ENCODE measurements at regions of chr1 and their contacts with region 1.

Region 1: DNA sequence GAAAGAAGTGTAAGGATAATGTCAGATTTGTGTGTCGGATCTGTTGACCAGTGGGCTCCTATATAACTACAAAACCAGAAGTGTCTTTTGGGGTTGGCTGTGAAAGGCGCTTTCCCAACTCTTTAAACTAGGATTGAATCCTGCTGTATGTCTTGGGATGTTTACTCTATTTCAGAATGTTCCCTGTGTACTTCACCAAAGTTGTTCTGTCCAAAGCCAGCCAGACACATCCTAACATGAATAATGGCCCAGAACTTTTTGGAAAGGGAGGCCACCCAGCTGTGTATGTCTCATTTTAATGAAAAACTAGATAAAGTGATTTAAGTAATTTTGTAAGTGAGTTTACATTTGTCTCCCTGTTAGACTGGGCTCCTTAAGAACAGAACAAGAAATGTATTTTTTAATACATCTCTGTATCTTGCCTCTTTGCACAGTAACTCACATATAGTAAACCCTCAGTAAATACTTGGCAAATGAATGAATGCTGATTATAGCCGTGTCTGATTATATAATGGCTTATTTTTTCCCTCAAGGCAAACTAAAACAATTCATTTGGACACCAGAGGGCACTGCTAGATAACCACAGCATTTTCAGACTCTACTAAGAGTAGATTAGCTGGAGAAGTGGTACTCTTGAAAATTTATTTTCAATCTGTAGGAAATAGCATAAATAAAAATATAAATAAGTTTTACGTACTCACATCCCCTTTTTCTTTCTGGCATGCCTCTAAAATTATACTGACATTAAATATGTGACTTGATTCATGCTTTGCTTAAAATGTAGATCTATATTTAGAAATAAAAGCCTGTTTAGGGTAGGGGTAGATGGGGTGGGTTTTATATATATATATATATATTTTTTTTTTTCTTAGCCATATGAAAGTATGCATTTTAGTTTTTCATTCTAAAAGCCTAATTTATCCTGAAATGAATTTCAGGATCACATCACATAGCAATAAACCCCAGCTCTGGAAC is 23.8 kb downstream of the TSEN15 start:
- DNase-seq: peak in 1 of 2 donors; percentile 67
- ATAC-seq: peak; percentile 65 to 91 (median 84)
- H3K4me3 ChIP-seq: no peak overlapping the region
- H3K27ac ChIP-seq: peak overlapping the region in 7 of 10 donors; percentile 2 to 69 (median 46)
- H3K4me1 ChIP-seq: peaks cover 0 to 29% (median 9%) of the 10 kb centered on the region in 9 donors
- H3K27me3 ChIP-seq: no peaks in the 10 kb centered on the region
- CTCF ChIP-seq: peak; percentile 55 to 91 (median 79)

Region 2: GRCh38 chr1:184222652-184223052 is 147.3 kb after region 1 on chr1:
- intact Hi-C with region 1: loop called (anchors 1 to 5 kb)
- DNase-seq: peak; percentile 48 to 56
- ATAC-seq: peak; percentile 46 to 76 (median 65)
- H3K4me3 ChIP-seq: peak overlapping the region in 9 of 10 donors; percentile 12 to 49 (median 37)
- H3K27ac ChIP-seq: peak overlapping the region in 5 of 10 donors; percentile 4 to 37 (median 28)
- H3K4me1 ChIP-seq: peaks cover 0 to 8% (median 4%) of the 10 kb centered on the region in 9 donors
- H3K27me3 ChIP-seq: no peaks in the 10 kb centered on the region
- CTCF ChIP-seq: peak; percentile 92 to 99 (median 96)

Region 3: DNA sequence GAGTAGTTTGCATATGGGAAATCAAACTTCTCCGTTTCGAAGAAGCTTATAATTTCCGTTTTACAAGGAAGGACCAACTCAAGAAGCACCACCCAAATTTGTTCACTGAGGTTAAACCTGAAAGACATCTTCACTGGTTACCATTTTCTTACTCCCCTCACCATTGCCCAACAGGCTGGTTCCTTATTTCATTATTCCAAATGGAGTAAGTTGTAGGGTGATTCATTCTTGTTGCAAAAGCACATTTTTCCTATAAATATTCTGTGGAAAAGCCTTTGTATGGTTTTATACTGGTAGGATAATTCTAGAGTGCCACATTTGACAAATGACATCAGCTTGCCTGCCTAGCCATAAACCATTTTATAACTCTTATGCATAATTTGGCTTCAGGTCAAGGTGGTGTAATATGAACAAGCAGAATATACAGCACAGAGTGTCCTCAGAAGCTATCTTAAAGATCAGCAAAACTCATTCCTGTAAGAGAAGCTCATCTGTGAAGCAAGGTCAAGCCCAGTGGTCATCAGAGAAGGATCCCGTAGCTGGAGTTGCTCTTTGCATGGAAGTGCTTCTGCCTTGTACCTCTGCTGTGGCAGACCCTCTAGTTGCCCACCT is 287.4 kb after region 1 on chr1:
- intact Hi-C with region 1: loop called in 1 of 10 experiments (anchors 10 kb)
- DNase-seq: no peak
- ATAC-seq: peak in 1 of 8 donors; percentile 35
- H3K4me3 ChIP-seq: no peak overlapping the region
- H3K27ac ChIP-seq: no peak overlapping the region
- H3K4me1 ChIP-seq: peaks cover 0 to 8% (median 0%) of the 10 kb centered on the region in 9 donors
- H3K27me3 ChIP-seq: no peaks in the 10 kb centered on the region
- CTCF ChIP-seq: no peak

Region 4: DNA sequence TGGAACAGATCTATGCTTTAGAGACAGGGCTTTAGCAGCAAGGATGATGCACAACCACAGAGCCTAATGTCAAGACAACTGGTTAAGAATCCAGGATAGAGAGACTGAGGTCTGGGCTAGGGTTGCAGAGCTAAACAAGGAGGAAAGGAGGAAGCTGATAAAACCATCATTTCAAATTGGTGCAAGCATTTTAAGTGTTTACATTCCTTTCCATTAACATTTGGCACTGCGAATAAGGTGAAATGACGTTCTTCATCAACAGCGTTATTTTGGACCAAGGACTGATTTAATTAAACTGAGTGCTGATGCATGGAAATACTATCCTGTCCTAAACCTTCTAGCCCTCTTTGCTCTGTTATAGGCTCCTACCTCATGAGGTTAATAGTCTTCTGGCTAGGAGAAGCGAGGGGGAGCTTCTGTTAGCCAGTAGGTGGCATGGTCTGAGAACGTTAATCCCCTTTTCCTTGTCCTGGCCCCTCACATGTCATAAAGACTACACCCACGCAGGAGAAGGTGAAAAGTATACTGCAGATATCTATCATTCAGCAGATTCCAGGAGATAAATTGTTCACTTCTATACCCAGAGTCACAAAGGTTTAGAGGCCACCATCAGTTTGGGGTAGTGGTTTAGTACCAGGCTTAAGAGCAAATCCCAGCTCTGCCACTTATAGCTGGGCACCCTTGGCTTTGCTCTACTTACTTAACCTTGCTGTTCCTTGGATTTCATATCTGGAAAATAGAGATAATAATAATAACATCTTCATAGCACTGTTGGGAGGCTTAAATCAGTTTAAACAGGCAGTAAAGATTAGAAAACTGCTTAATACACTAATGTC is 304.0 kb after region 1 on chr1:
- intact Hi-C with region 1: loop called in 3 of 10 experiments (anchors 5 to 10 kb)
- DNase-seq: no peak
- ATAC-seq: peak in 5 of 8 donors; percentile 60 to 67 (median 65)
- H3K4me3 ChIP-seq: no peak overlapping the region
- H3K27ac ChIP-seq: no peak overlapping the region
- H3K4me1 ChIP-seq: peaks cover 0 to 8% (median 0%) of the 10 kb centered on the region in 9 donors
- H3K27me3 ChIP-seq: no peaks in the 10 kb centered on the region
- CTCF ChIP-seq: peak in 7 of 9 donors; percentile 7 to 50 (median 42)

Region 5: DNA sequence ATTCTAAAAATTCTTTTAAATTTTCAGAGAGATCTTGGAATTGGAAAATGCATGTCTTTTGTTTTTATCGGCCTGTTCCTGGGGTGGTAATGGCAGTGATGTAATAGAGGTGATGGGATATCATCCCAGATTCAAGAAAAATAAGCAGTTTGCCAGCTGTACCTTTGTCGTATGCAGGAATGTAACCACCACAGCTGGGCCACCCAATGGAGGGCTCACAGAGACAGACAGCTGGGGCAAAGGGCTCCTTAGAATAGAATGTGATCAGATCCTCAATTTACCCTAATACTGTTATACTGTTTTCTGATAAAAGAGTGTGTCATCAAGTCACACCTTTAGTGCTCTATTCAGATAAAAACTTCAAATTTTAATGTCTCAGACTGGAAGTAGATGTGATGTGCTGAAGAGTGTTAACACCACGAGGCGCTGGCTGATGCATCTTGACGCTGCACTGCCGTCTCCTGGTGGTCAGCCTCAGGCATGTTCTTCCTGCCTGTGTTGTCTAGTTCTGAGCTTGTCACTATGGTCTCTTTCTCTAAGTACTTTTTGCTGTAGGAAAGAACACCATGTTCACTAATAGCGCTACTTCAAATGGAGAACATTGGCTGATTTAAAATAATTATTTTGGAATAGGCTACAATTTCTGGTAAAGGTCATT is 390.3 kb after region 1 on chr1:
- intact Hi-C with region 1: loop called in 1 of 10 experiments (anchors 10 kb)
- DNase-seq: peak in 1 of 2 donors; percentile 39
- ATAC-seq: peak in 7 of 8 donors; percentile 48 to 84 (median 66)
- H3K4me3 ChIP-seq: no peak overlapping the region
- H3K27ac ChIP-seq: peak overlapping the region in 4 of 10 donors; percentile 10 to 24 (median 18)
- H3K4me1 ChIP-seq: peaks cover 7 to 84% (median 36%) of the 10 kb centered on the region in 9 donors
- H3K27me3 ChIP-seq: no peaks in the 10 kb centered on the region
- CTCF ChIP-seq: peak in 8 of 9 donors; percentile 16 to 64 (median 40)

Region 6: DNA sequence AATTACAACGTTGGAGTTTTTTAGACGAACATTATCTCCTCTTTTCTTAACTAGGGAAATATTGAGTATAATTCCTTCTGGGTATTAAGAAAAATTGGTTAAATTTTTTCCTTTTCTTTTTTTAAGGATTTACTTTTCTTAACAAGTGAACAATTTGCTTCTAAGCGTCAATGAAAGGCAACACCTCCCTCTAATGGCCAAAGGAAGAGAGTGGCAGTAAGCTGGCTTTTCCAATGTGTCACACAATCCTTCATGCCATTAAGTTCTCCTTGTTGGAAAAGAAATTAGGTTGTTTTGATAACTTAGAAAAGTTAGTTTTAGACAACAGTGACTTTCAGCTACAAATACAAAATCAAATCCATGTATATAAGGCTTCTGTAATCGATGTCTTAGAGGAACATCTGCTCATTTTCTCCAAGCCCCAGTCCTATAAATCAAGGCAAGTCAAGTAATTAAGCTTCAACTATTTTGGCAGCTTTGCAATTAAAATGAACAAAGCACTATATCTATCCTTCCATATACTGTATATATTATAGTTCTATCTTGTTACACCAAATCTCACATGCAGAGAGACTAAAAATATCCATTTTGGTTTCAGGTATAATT is 616.5 kb after region 1 on chr1:
- intact Hi-C with region 1: loop called in 5 of 10 experiments (anchors 2 to 10 kb)
- DNase-seq: no peak
- ATAC-seq: peak in 3 of 8 donors; percentile 55 to 65 (median 62)
- H3K4me3 ChIP-seq: no peak overlapping the region
- H3K27ac ChIP-seq: no peak overlapping the region
- H3K4me1 ChIP-seq: peaks cover 0 to 5% (median 0%) of the 10 kb centered on the region in 9 donors
- H3K27me3 ChIP-seq: no peaks in the 10 kb centered on the region
- CTCF ChIP-seq: peak; percentile 67 to 89 (median 78)